Heart right ventricle (tissue), 16 donors: ENCODE measurements at regions of chr7 and their contacts with region 1.

Region 1: GRCh38 chr7:44477063-44477830 is 13.2 kb downstream of the NUDCD3 start:
- DNase-seq: peak; percentile 24 to 34
- ATAC-seq: peak; percentile 81 to 93 (median 88)
- H3K4me3 ChIP-seq: no peak overlapping the region
- H3K27ac ChIP-seq: peak overlapping the region in 7 of 10 donors; percentile 33 to 60 (median 55)
- H3K4me1 ChIP-seq: peaks cover 0 to 45% (median 31%) of the 10 kb centered on the region in 9 donors
- H3K27me3 ChIP-seq: no peaks in the 10 kb centered on the region
- CTCF ChIP-seq: peak; percentile 68 to 95 (median 92)

Region 2: DNA sequence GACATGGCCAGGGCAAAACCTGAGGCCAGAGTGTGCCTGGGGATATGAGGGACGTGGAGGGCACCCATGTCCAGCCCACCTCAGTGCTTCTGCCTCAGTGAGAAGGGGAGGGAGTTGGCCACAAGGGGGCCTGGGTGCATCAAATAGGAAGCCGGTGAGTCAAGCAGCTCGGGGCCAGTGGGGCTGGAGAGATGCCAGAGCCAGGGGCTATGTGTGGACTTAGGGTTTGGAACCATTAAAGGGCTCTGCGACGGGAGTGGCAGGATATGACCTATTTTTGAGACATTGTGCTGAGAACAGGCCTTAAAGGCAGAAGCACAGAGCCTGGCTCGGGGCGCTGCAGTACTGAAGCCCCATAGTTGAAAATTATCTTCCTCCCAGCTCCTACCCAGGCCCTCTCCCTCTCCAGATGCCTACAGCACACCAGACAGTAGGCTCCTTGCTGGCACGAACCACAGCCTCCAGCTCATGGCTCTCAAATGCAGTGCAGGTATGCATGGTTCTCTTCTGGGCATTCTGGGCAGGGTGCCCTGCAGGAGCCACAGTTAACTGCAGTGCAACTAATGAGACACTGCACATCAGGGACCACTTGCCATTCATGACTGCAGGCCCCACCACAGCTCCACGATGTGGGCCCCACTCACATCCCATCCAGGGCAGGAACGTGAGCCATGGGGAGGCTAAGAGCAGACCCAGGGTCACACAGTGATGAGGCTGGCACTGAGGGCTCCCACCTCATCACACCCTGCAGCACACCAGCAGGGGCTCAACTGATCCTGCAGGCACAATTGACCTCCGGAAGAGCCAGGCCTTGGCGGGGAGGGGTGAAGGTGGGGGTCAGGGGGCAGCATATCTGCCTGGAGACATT is 404.6 kb before region 1 on chr7:
- intact Hi-C with region 1: loop called in 1 of 10 experiments (anchors 5 kb)
- DNase-seq: peak; percentile 81 to 82
- ATAC-seq: peak; percentile 50 to 79 (median 68)
- H3K4me3 ChIP-seq: no peak overlapping the region
- H3K27ac ChIP-seq: peak overlapping the region in 9 of 10 donors; percentile 64 to 93 (median 74)
- H3K4me1 ChIP-seq: peaks cover 19 to 58% (median 43%) of the 10 kb centered on the region in 9 donors
- H3K27me3 ChIP-seq: no peaks in the 10 kb centered on the region
- CTCF ChIP-seq: peak; percentile 37 to 83 (median 73)

Region 3: DNA sequence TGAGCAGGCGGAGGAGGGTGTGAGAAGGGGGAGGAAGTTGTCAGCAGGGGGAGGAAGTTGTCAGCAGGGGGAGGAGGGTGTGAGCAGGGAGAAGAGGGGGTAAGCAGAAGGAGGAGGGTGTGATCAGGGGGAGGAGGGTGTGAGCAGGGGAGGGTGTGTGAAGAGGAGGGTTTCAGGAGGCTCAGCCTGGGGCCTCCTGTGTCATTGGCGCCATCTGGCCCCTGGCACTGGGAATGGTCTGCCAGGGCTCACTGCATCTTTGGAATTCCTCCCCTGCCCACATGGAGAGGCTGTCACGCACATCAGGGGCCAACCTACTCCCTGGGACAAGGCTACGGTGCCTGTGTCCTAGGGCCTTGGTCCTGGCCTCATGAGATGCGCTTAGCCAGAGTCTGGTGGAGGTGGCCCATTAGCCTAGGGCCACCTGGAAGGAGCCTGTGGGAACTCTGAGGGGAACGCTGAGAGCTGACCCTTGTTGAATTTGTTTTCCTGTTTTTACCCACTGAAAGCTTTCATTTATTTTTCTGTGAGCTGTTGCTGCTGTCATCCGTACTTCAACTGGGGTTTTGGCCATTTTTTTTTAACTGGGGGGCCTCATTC is 169.8 kb before region 1 on chr7:
- intact Hi-C with region 1: loop called in 1 of 10 experiments (anchors 10 kb)
- DNase-seq: no peak
- ATAC-seq: peak; percentile 59 to 85 (median 72)
- H3K4me3 ChIP-seq: no peak overlapping the region
- H3K27ac ChIP-seq: peak overlapping the region in 5 of 10 donors; percentile 32 to 89 (median 84)
- H3K4me1 ChIP-seq: peaks cover 0 to 51% (median 20%) of the 10 kb centered on the region in 9 donors
- H3K27me3 ChIP-seq: peaks cover 0 to 30% (median 5%) of the 10 kb centered on the region in 7 donors
- CTCF ChIP-seq: peak in 5 of 9 donors; percentile 27 to 58 (median 49)

Region 4: GRCh38 chr7:44333911-44334733 is 143.1 kb before region 1 on chr7:
- intact Hi-C with region 1: loop called in 2 of 10 experiments (anchors 10 kb)
- DNase-seq: no peak
- ATAC-seq: peak; percentile 8 to 88 (median 69)
- H3K4me3 ChIP-seq: no peak overlapping the region
- H3K27ac ChIP-seq: peak overlapping the region; percentile 3 to 88 (median 72)
- H3K4me1 ChIP-seq: peaks cover 0 to 42% (median 14%) of the 10 kb centered on the region in 9 donors
- H3K27me3 ChIP-seq: no peaks in the 10 kb centered on the region
- CTCF ChIP-seq: no peak

Region 5: GRCh38 chr7:44398511-44398911 is 78.7 kb before region 1 on chr7:
- intact Hi-C with region 1: loop called in 1 of 10 experiments (anchors 5 kb)
- DNase-seq: peak in 1 of 2 donors; percentile 39
- ATAC-seq: peak; percentile 28 to 93 (median 66)
- H3K4me3 ChIP-seq: no peak overlapping the region
- H3K27ac ChIP-seq: peak overlapping the region in 7 of 10 donors; percentile 21 to 64 (median 42)
- H3K4me1 ChIP-seq: peaks cover 3 to 41% (median 23%) of the 10 kb centered on the region in 9 donors
- H3K27me3 ChIP-seq: no peaks in the 10 kb centered on the region
- CTCF ChIP-seq: no peak

Region 6: DNA sequence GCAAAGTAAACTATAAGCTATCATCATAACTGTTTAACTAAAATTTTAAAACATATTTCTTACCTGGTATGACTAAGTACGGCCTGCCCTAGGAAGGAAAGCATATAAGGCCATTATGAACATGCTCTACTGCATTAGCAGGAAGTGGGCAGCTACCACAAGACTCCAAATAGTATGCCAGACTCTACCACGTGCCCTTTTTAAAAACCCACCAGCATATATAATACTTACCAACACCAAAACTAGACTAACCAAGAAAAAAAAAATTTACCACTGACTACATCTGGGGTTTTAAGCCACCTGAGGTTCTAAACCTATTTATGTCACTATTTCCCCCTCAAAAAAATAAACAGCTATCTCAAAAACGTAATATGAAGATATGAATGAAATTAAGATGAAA is 16.9 kb before region 1 on chr7:
- intact Hi-C with region 1: no loop called
- DNase-seq: no peak
- ATAC-seq: no peak
- H3K4me3 ChIP-seq: no peak overlapping the region
- H3K27ac ChIP-seq: no peak overlapping the region
- H3K4me1 ChIP-seq: peaks cover 5 to 47% (median 31%) of the 10 kb centered on the region in 9 donors
- H3K27me3 ChIP-seq: no peaks in the 10 kb centered on the region
- CTCF ChIP-seq: no peak